ENCODE measurements at regions of chr7 and their contacts with region 1.

Region 1: DNA sequence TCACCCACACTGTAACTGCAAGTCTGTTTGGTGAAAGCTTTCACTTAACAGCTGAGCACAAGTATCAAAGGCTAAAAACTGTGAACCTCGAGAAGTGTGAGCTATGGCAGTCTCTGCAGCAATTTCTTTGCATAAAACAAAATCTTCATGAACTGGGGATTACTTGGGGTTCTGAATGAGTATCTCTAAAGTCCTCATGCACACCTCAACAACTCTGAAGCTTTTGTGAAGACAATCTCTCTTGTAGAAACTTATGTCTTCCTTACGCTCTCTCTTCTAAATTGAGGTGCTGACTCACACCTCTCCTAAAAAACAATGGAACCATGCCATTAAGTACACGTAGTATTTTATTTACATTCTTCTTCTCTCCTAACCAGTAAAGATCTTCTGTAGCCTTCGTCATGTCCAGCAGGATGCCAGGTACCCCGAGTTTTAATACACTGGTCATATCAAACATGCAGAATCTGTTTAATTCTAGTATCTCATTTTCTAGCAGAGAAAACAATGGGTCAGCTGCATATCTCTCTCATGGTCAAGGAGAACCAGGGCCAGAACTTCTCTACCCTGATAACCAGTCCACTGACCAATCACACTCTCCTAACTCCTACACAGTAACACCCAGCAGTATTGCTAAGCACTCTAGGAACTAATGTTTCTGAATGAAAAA is 76.9 kb downstream of the UBE2H start:
- DNase-seq: no peak
- H3K4me3 ChIP-seq: peak overlapping the region in 1 of 2 donors; percentile 2
- H3K27ac ChIP-seq: no peak overlapping the region
- H3K4me1 ChIP-seq: peaks cover 0 to 68% (median 21%) of the 10 kb centered on the region in 4 donors
- H3K27me3 ChIP-seq: no peaks in the 10 kb centered on the region
- CTCF ChIP-seq: no peak

Region 2: GRCh38 chr7:129923709-129924108 is 47.8 kb after region 1 on chr7:
- intact Hi-C with region 1: loop called (anchors 10 kb)
- DNase-seq: no peak
- H3K4me3 ChIP-seq: no peak overlapping the region
- H3K27ac ChIP-seq: peak overlapping the region; percentile 6 to 11
- H3K4me1 ChIP-seq: peaks cover 0 to 68% (median 23%) of the 10 kb centered on the region in 4 donors
- H3K27me3 ChIP-seq: no peaks in the 10 kb centered on the region
- CTCF ChIP-seq: no peak